Left ventricle myocardium superior (tissue), 1 donor: ENCODE measurements at regions of chr12 and their contacts with region 1.

Region 1: DNA sequence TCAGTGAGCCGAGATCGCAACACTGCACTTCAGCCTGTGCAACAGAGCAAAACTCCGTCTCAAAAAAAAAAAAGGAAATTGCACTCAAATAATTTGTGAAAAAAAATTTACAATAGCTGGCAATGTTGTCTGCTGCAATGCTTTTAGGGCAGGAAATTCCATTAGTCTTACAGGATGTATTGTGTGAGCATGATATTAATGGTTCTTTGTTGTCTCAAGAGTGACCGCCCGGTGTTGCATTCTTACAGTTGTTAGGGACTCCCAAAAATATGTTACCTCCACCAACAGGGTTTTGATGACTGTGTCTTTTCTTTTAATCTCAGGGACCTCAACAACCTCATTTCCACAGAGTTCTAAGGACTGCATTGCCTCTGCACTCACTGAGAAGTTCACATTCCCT is 44.8 kb downstream of the PZP start:
- DNase-seq: no peak
- ATAC-seq: peak; percentile 77

Region 2: GRCh38 chr12:8914716-8915526 is 248.5 kb before region 1 on chr12:
- intact Hi-C with region 1: no loop called
- DNase-seq: peak; percentile 63
- ATAC-seq: peak; percentile 70

Region 3: GRCh38 chr12:9124383-9125031 is 38.9 kb before region 1 on chr12:
- intact Hi-C with region 1: loop called (anchors 5 kb)
- DNase-seq: no peak
- ATAC-seq: peak; percentile 14